Lower leg skin (tissue), 4 donors: ENCODE measurements at regions of chr14 and their contacts with region 1.

Region 1: DNA sequence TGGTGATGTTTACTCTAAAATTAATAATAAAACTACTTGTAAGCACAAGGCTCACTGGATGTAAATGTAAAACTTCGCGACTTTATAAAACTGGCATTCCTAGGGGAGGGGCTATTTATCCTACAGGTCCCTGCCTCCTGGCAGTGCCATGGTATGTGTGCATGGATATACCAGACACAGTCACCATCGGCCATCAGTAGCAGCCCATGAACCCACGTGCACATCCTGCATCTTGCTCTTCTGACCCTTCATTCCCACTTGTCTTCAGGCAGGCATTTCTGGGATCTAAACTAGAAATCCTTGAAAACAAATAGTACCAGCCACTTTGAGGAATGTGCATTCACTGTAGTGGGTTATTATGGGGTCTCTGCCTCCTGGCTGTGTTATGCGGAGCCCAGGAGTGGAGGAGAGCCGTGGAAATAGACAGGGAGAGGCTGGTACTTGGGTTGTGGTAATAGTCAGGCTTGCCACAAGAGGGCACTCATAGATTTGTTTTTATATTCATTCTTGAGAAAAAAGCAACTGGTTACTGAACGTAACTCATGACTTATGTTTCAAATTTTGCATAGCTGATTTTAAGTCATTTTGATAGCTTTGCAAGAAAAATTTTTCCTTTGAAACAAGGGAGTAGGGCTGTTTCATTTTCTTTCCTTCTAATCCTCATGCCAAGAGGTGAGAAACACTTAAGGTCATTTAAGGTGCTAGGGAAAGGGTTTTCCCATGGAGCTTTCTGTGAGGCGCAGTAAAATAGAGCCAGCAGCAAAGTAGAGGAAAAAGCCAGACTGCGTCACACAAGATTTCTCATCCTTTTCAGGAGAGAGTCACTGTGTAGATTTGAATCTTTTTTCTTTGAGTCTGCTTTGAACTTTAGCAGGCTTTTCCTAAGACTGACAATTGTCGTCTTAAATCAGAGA is 17.4 kb upstream of the GALNT16 start:
- DNase-seq: peak in 1 of 2 donors; percentile 75
- H3K4me3 ChIP-seq: no peak overlapping the region
- CTCF ChIP-seq: peak in 1 of 3 donors; percentile 63
- POLR2A ChIP-seq: no peak

Region 2: GRCh38 chr14:68423686-68424085 is 818.9 kb before region 1 on chr14:
- intact Hi-C with region 1: loop called (anchors 5 kb)
- DNase-seq: no peak
- H3K4me3 ChIP-seq: no peak overlapping the region
- CTCF ChIP-seq: no peak
- POLR2A ChIP-seq: no peak

Region 3: GRCh38 chr14:68987653-68988036 is 254.9 kb before region 1 on chr14:
- intact Hi-C with region 1: no loop called
- DNase-seq: no peak
- H3K4me3 ChIP-seq: no peak overlapping the region
- CTCF ChIP-seq: no peak
- POLR2A ChIP-seq: no peak

Region 4: GRCh38 chr14:69129264-69129880 is 113.2 kb before region 1 on chr14:
- intact Hi-C with region 1: loop called (anchors 10 kb)
- DNase-seq: peak; percentile 60 to 89
- H3K4me3 ChIP-seq: no peak overlapping the region
- CTCF ChIP-seq: peak in 1 of 3 donors; percentile 66
- POLR2A ChIP-seq: no peak

Region 5: GRCh38 chr14:69288011-69288771 is 45.6 kb after region 1 on chr14:
- intact Hi-C with region 1: loop called (anchors 2 kb)
- DNase-seq: peak in 1 of 2 donors; percentile 89
- H3K4me3 ChIP-seq: no peak overlapping the region
- CTCF ChIP-seq: no peak
- POLR2A ChIP-seq: no peak

Region 6: GRCh38 chr14:69460093-69460701 is 217.6 kb after region 1 on chr14:
- intact Hi-C with region 1: loop called (anchors 5 kb)
- DNase-seq: peak; percentile 69 to 87
- H3K4me3 ChIP-seq: no peak overlapping the region
- CTCF ChIP-seq: no peak
- POLR2A ChIP-seq: no peak